ENCODE measurements at regions of chr10 and their contacts with region 1.

Region 1: DNA sequence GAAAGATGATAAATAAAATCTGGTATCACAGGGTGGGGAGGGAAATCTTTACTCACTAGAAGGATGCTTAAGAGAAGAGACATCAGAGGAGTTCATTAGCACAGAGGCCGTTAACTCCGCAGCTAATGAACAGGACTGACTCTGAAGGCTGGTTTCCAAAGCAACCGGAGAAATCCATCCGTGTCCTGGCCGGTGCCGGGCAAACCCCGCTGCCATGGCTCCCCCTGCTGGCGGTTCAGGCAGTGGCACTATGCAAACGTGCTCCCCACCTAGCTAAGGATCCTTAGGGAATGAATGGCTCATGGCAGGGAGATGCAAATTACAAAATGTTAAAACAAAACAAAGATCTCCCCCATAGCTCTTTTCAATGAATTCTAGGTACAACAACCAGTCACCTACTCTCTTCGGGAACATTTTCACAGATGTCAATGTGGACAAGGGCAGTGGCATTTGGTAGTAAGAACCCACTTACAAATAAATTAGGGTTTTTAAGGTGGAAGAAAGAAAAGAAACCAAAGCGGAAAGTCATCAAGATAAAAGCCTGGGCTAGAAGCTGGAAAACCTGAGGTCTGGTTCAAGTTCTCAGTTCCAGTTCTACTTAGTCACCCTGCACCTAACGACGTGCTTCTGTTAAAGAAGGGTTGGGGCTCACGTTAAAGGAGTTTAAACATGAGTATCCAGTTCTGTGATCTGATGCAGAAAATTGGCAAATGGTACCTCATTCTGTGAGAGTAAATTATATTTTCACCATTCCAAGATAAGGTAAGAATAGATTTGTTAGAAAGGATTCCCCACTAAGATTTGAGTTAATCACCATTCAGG is 138.2 kb downstream of the SVIL start:
- DNase-seq: peak; percentile 78 to 90
- H3K4me3 ChIP-seq: no peak overlapping the region
- H3K4me3 Mint-ChIP-seq: no peak overlapping the region
- H3K27ac Mint-ChIP-seq: no peak overlapping the region
- H3K4me1 ChIP-seq: no peaks in the 10 kb centered on the region
- H3K4me1 Mint-ChIP-seq: no peaks in the 10 kb centered on the region
- H3K27me3 ChIP-seq: no peaks in the 10 kb centered on the region
- H3K27me3 Mint-ChIP-seq: no peaks in the 10 kb centered on the region
- CTCF ChIP-seq: peak; percentile 98

Region 2: DNA sequence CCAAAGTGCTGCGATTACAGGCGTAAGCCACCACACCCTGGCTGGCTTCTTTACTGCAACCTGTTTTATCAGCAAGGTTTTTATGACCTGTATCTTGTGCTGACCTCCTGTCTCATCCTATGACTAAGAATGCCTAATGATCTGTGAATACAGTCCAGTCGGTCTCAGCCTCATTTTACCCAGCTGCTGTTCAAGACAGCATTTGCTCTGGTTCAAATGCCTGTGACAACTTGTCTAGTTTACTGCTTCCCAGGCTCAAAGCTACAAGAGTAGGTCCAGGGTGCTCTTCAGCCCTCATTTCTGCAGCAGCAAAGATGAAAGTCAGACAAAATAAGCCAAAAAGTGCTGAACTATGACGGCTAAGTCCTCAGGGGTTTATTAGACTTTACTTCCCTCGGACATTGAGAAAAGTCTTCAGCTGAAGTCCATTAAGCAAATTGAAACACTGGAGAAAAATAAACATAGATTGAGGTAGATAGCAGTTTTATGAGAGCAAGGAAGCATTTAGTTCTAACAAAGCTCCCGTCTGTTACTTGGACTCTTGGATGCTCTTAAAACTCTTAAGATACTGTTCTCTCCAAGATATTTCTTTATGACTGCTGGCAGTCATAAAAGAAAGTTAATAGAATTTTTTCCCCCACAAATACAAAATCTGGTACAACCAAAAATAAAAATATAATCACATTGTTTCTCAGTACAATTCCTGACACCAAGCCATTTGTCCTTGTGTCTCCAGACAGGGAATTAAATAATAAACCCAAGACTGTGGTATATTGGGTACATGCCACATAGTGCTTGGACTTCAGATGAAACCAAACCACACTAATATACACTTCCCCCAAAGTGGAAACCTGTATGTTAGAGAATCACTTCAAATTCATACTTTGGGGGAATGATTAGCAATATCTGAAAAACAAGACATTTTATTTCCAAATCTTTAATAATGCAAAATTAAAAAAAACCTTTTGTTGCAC is 220.0 kb before region 1 on chr10:
- CTCF ChIA-PET with region 1: no interaction called
- POLR2A ChIA-PET with region 1: no interaction called
- intact Hi-C with region 1: no loop called
- DNase-seq: no peak
- H3K4me3 ChIP-seq: no peak overlapping the region
- H3K4me3 Mint-ChIP-seq: no peak overlapping the region
- H3K27ac Mint-ChIP-seq: no peak overlapping the region
- H3K4me1 ChIP-seq: peaks cover 23% of the 10 kb centered on the region
- H3K4me1 Mint-ChIP-seq: peaks cover 25% of the 10 kb centered on the region
- H3K27me3 ChIP-seq: no peaks in the 10 kb centered on the region
- H3K27me3 Mint-ChIP-seq: no peaks in the 10 kb centered on the region
- CTCF ChIP-seq: no peak

Region 3: GRCh38 chr10:29517352-29517923 is 20.9 kb after region 1 on chr10:
- CTCF ChIA-PET with region 1: interaction called, 17 read pairs
- POLR2A ChIA-PET with region 1: no interaction called
- intact Hi-C with region 1: no loop called
- DNase-seq: peak in 1 of 2 experiments; percentile 63
- H3K4me3 ChIP-seq: no peak overlapping the region
- H3K4me3 Mint-ChIP-seq: no peak overlapping the region
- H3K27ac Mint-ChIP-seq: no peak overlapping the region
- H3K4me1 ChIP-seq: 0 out of 2 replicates have a peak, but pooled peaks cover 5% of the 10 kb centered on the region
- H3K4me1 Mint-ChIP-seq: peaks cover 6% of the 10 kb centered on the region
- H3K27me3 ChIP-seq: no peaks in the 10 kb centered on the region
- H3K27me3 Mint-ChIP-seq: no peaks in the 10 kb centered on the region
- CTCF ChIP-seq: peak; percentile 76 to 82

Region 4: DNA sequence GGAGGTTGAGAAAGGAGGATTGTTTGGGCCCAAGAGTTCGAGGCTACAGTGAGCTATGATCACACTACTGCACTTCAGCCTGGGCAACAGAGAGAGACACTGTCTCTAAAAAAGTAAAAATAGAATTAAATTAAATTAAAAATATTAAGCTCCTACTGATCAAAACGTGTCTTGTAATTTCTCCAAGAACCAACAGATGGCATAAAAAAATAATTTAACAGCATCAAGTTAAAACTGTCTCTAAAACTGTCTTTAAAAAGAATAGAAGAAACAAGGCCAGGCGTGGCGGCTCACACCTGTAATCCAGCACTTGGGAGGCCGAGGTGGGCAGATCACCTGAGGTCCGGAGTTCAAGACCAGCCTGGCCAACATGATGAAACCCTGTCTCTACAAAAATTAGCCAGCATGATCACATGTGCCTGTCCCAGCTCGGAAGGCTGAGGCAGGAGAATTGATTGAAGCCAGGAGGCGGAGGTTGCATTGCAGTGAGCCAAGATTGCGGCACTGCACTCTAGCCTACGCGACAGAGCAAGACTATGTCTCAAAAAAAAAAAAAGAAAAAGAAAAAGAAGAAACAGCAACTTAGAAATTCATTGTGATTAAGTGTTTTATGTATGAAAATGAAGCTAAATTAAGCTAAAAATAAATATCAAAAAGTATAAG is 828.0 kb after region 1 on chr10:
- CTCF ChIA-PET with region 1: no interaction called
- POLR2A ChIA-PET with region 1: no interaction called
- intact Hi-C with region 1: no loop called
- DNase-seq: no peak
- H3K4me3 ChIP-seq: no peak overlapping the region
- H3K4me3 Mint-ChIP-seq: no peak overlapping the region
- H3K27ac Mint-ChIP-seq: no peak overlapping the region
- H3K4me1 ChIP-seq: no peaks in the 10 kb centered on the region
- H3K4me1 Mint-ChIP-seq: no peaks in the 10 kb centered on the region
- H3K27me3 ChIP-seq: no peaks in the 10 kb centered on the region
- H3K27me3 Mint-ChIP-seq: no peaks in the 10 kb centered on the region
- CTCF ChIP-seq: no peak